H1 (cell line): ENCODE measurements at regions of chr11 and their contacts with region 1.

Region 1: DNA sequence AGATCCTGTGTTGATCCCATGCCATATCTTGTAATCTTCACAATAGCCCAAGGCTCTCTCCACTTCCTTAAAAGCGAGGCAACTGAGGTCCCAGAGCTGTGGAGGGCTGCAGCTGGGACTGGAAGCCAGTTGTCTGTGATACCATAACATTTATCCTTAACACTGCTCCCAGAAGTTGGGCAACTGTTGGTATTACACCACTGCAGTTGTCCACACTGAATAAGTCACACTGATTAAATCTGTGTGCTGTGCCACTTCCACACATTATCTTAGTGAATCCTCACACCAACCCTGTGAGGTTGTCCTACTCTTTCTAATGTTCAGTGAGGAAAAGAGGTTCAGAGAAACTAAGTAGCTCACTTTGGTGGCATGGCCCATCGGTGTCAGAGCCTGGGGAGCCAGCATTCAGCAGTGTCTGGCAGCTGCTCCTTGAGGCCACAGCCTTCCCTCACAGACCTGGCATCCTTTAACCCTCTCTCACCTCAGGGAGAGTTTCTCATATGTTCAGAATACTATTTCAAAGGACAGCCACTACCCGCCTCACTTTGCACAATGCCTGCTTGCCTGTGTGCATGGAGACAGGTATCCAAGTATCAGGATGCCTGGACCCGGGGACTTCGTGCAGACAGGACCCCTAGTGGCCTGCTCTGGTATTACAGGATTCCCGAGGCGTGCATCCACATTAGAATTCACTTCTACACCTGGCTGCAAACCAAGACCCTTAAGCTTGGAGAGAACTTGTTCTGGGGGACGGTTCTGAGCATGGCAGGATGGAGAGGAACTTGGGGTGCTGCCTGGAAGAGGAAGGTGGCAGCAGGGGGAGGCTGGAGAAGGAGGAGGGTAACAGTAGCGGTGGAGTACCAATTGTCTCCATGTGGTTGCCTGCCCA is 221.9 kb upstream of the TBCEL start:
- DNase-seq: peak; percentile 25 to 91
- H3K4me3 ChIP-seq: no peak overlapping the region
- H3K27ac ChIP-seq: no peak overlapping the region
- H3K4me1 ChIP-seq: peaks cover 0 to 3% (median 1%) of the 10 kb centered on the region in 4 experiments; a peak in 4 of 7 replicates
- H3K27me3 ChIP-seq: no peaks in the 10 kb centered on the region
- CTCF ChIP-seq: peak; percentile 85 to 95 (median 86)
- EP300 ChIP-seq: no peak
- POLR2A ChIP-seq: no peak
- RAD21 ChIP-seq: peak; percentile 80 to 90

Region 2: DNA sequence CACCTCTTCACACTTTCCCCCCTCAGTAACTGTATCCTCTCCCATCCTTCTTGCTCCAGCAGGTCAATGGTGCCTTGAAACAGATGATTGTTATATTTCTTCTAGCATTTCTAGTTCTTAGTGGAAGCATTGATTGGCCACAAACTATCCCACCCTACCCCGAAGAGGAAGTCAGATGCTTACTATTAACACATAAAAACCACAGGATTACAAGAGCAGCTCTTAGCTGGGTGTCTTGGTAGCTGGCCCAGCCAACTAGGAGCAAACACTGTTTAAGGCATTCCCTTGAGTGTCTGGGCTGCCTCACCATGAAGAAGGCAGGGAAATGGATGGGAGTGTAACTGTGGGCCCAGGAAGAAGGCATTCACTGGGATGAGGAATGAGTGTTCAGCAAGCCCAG is 113.9 kb before region 1 on chr11:
- CTCF ChIA-PET with region 1: interaction called, 17 read pairs
- POLR2A ChIA-PET with region 1: no interaction called
- DNase-seq: no peak
- H3K4me3 ChIP-seq: no peak overlapping the region
- H3K27ac ChIP-seq: no peak overlapping the region
- H3K4me1 ChIP-seq: no peaks in the 10 kb centered on the region
- H3K27me3 ChIP-seq: no peaks in the 10 kb centered on the region
- CTCF ChIP-seq: no peak
- EP300 ChIP-seq: no peak
- POLR2A ChIP-seq: no peak
- RAD21 ChIP-seq: no peak

Region 3: DNA sequence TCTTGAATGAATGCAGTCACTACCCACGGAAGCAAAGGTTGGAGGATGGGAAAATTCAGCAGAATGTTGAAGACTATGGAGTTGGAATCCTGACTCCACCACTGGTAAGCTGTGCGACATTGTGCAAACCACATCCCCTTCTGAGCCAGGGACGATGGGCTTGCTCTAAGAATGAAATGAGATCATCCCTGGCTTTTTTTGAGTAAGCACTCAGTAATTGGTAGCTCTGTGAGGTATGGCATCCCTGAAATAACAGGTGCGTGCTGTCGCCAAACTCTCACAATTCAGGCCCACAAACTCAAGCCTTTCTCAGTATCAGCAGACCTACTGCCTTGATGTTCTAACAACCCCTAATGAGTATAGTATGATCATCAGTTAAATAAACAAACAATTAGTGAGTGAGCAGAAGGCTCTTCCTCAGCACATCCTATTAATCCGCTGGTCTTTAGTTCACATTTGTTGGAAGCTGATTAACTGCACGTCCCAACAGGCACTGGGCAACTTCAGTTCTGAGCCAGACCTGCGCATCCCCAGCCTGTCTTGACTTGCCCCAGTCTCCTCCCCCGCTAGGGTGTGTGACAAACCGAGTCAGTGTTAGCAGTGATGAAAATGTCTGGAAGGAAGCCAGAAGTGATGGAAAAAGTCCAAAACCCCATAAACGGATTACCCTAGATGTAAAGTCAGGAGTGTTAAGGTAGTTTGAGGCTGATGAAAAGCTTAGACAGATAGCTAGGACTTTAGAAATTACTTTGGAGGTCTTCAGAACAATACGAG is 55.0 kb before region 1 on chr11:
- CTCF ChIA-PET with region 1: interaction called, 19 read pairs
- POLR2A ChIA-PET with region 1: no interaction called
- DNase-seq: no peak
- H3K4me3 ChIP-seq: no peak overlapping the region
- H3K27ac ChIP-seq: no peak overlapping the region
- H3K4me1 ChIP-seq: peaks cover 2 to 8% (median 4%) of the 10 kb centered on the region in 4 experiments; a peak in 5 of 7 replicates
- H3K27me3 ChIP-seq: peaks cover 0 to 2% (median 0%) of the 10 kb centered on the region in 4 experiments; a peak in 1 of 7 replicates
- CTCF ChIP-seq: no peak
- EP300 ChIP-seq: no peak
- POLR2A ChIP-seq: no peak
- RAD21 ChIP-seq: no peak

Region 4: DNA sequence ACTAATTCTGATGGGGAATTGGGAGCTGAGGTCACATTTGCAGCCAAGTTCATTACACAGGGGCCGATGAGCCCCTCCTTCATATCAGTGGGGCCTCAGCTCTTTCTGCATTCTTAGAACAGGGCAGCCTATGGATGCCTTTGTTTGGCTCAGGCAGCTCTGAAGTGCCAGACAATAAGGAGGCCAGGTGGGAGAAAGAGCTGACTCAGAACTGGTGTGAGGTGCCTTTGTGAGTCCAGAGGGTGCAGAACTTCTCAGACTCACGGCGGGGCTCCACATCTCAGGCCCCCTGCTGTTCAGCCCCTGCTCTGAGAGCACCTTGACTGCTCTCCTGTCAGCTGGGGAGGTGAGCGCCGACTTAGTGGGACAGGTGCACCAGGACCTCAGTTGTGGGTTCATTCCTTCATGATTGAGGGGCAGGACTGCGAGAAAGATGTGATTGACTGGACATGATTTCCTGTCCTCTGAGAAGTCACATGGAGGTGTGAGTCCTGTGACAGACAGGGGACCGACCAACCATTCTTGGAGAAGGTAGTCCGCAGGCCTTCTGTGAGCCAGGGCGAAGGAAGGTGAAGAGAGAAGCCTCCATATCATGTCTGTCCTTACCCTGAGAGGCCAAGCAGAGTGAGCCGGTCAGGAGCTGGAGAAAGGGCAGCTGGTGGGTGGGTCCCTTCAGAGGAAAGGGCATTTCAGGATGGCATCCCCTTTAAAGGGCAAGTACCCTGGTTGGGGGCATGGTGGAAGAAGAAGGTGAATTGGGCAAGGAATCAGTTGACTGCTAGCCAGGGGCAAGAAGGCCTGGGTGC is 23.2 kb before region 1 on chr11:
- CTCF ChIA-PET with region 1: interaction called, 26 read pairs
- POLR2A ChIA-PET with region 1: no interaction called
- DNase-seq: no peak
- H3K4me3 ChIP-seq: no peak overlapping the region
- H3K27ac ChIP-seq: no peak overlapping the region
- H3K4me1 ChIP-seq: peaks cover 12 to 20% (median 17%) of the 10 kb centered on the region in 4 experiments
- H3K27me3 ChIP-seq: no peaks in the 10 kb centered on the region
- CTCF ChIP-seq: no peak
- EP300 ChIP-seq: no peak
- POLR2A ChIP-seq: no peak
- RAD21 ChIP-seq: no peak

Region 5: GRCh38 chr11:120827198-120827597 is 25.2 kb after region 1 on chr11:
- CTCF ChIA-PET with region 1: interaction called, 15 read pairs
- POLR2A ChIA-PET with region 1: no interaction called
- DNase-seq: no peak
- H3K4me3 ChIP-seq: no peak overlapping the region
- H3K27ac ChIP-seq: no peak overlapping the region
- H3K4me1 ChIP-seq: no peaks in the 10 kb centered on the region; a peak in 1 of 7 replicates
- H3K27me3 ChIP-seq: no peaks in the 10 kb centered on the region
- CTCF ChIP-seq: no peak
- EP300 ChIP-seq: no peak
- POLR2A ChIP-seq: no peak
- RAD21 ChIP-seq: no peak

Region 6: GRCh38 chr11:120854988-120855387 is 52.9 kb after region 1 on chr11:
- CTCF ChIA-PET with region 1: interaction called, 13 read pairs
- POLR2A ChIA-PET with region 1: no interaction called
- DNase-seq: no peak
- H3K4me3 ChIP-seq: no peak overlapping the region
- H3K27ac ChIP-seq: no peak overlapping the region
- H3K4me1 ChIP-seq: peaks cover 0 to 3% (median 0%) of the 10 kb centered on the region in 4 experiments; a peak in 2 of 7 replicates
- H3K27me3 ChIP-seq: no peaks in the 10 kb centered on the region
- CTCF ChIP-seq: no peak
- EP300 ChIP-seq: no peak
- POLR2A ChIP-seq: no peak
- RAD21 ChIP-seq: no peak

Region 7: DNA sequence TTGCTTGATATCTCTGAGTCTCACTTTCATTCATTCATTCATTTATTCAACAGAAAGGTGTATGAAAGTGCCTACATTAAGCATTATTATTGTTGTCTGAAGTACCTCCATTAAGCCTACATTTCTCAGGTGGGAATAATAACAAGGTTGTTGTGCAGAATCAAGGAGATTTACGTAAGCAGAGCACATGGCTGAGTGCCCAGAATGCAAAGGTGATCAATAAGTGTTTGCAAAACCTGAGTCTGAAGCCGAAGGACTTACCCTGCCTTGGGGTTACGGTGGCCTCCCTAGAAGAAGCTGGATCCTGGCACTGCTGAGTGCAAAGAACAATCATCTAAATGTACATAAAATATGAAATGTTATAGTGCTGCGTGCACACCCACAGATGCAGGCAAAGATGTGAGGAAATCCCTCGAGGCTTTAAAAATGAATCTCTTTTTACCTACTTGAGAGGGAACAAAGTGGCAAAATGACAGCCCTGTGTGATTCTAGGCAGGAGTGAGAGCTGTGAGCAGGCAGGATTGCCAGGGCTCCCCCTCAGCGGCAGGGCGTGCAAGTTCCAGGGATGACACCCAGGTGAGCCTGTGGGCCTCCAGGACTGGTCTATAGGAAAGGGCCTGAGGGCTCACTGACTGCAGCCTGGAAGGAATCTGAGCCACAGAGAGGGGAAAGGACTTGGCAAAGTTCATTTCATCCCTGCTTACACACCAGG is 88.7 kb after region 1 on chr11:
- CTCF ChIA-PET with region 1: no interaction called
- POLR2A ChIA-PET with region 1: no interaction called
- DNase-seq: no peak
- H3K4me3 ChIP-seq: no peak overlapping the region
- H3K27ac ChIP-seq: no peak overlapping the region
- H3K4me1 ChIP-seq: peaks cover 0 to 7% (median 0%) of the 10 kb centered on the region in 4 experiments; a peak in 2 of 7 replicates
- H3K27me3 ChIP-seq: no peaks in the 10 kb centered on the region
- CTCF ChIP-seq: no peak
- EP300 ChIP-seq: no peak
- POLR2A ChIP-seq: no peak
- RAD21 ChIP-seq: no peak

Region 8: GRCh38 chr11:121104312-121104762 is 302.3 kb after region 1 on chr11:
- CTCF ChIA-PET with region 1: no interaction called
- POLR2A ChIA-PET with region 1: no interaction called
- DNase-seq: peak in 1 of 2 experiments; percentile 67
- H3K4me3 ChIP-seq: no peak overlapping the region
- H3K27ac ChIP-seq: no peak overlapping the region
- H3K4me1 ChIP-seq: peaks cover 0 to 3% (median 1%) of the 10 kb centered on the region in 4 experiments; a peak in 3 of 7 replicates
- H3K27me3 ChIP-seq: no peaks in the 10 kb centered on the region
- CTCF ChIP-seq: peak; percentile 76 to 94 (median 81)
- EP300 ChIP-seq: no peak
- POLR2A ChIP-seq: no peak
- RAD21 ChIP-seq: peak; percentile 27 to 59